Mammary epithelial cell (primary cell): ENCODE measurements at regions of chr3 and their contacts with region 1.

Region 1: DNA sequence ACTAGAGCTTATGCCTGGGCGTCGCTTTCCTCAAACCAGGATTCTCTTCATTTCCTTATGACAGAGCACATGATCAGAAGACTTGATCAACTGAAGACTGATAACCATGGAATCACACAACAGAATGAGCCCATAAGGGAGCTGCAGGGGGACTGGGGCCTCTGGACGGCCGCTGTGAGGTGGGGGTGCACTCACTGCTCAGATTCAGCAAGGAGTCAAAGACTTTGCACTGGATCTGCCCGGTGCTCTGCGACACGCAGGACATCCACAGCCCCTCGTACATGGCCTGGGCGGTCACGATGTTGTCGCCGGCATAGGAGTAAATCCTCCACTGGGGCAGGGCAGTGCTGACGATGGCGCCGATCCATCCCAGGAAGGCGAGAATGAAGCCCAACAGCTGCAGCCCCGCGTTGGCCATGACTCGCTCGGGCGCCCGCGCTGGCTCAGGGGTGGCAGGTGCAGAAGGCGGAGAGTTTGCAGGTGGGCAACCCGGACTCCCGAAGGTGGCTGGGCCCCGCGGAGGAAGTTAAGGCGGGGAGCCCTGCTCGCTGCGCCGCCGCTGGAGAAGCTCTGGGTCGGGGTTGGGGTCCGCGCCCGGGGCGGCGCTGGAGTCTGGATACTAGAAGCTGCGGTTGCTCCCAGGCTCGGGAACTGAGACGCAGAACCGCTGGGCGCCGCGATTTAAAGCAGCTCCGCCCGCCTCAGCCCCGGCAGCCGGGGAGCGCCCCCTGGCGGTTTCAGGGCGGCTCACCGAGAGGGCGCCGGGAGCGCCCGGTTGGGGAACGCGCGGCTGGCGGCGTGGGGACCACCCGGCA is at the start of gene CLDN1:
- DNase-seq: peak; percentile 74
- H3K4me3 ChIP-seq: peak within 1 kb of the TSS; percentile 43 to 72 (median 51)
- H3K27ac ChIP-seq: peak within 1 kb of the TSS; percentile 9
- H3K4me1 ChIP-seq: peaks cover 37% of the 10 kb centered on the region
- H3K27me3 ChIP-seq: no peaks in the 10 kb centered on the region
- CTCF ChIP-seq: peak; percentile 69 to 97
- total RNA-seq, gene CLDN1: 12.3 to 78.7 TPM

Region 2: GRCh38 chr3:189961525-189962161 is 360.4 kb before region 1 on chr3:
- CTCF ChIA-PET with region 1: no interaction called
- dilution Hi-C with region 1: loop called (anchors 5 kb)
- in situ Hi-C with region 1: loop called in 1 of 2 experiments (anchors 10 kb)
- intact Hi-C with region 1: loop called (anchors 1 kb)
- DNase-seq: peak; percentile 82
- H3K4me3 ChIP-seq: no peak overlapping the region
- H3K27ac ChIP-seq: peak overlapping the region; percentile 2
- H3K4me1 ChIP-seq: peaks cover 18% of the 10 kb centered on the region
- H3K27me3 ChIP-seq: no peaks in the 10 kb centered on the region
- CTCF ChIP-seq: peak; percentile 90 to 97

Region 3: DNA sequence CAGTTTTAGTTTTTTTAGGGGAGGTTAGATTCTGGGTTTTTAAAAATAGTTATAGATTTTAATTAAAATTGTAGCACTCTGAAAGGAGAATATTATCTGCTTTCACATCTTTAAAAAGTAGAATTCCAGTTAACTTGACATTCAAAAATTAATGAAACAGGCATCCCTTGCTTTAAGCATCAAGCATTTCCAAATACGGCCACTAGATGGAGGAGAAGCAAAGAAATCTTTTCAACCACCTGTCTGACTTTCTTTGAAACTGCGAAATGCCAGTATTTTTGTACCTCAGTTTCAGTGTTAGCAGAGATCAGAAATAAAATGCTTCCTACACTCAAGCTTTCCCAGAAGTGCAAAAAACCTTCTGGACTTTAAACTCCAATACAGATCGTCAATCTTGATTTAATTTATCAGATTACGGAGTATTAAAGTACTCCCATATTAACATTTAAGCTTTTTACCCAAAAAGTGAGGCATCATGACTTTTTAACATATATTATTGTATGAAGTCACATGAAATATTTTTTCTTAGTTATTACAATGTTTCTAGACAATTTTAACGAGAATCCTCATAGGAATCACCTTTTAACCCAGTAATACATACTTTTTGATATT is 354.6 kb before region 1 on chr3:
- CTCF ChIA-PET with region 1: no interaction called
- dilution Hi-C with region 1: loop called (anchors 5 kb)
- in situ Hi-C with region 1: loop called in 1 of 2 experiments (anchors 10 kb)
- intact Hi-C with region 1: loop called (anchors 1 kb)
- DNase-seq: peak; percentile 41
- H3K4me3 ChIP-seq: no peak overlapping the region
- H3K27ac ChIP-seq: no peak overlapping the region
- H3K4me1 ChIP-seq: peaks cover 6% of the 10 kb centered on the region
- H3K27me3 ChIP-seq: no peaks in the 10 kb centered on the region
- CTCF ChIP-seq: peak; percentile 69 to 90

Region 4: GRCh38 chr3:190017521-190018288 is 304.3 kb before region 1 on chr3:
- CTCF ChIA-PET with region 1: no interaction called
- dilution Hi-C with region 1: no loop called
- in situ Hi-C with region 1: no loop called
- intact Hi-C with region 1: loop called (anchors 5 kb)
- DNase-seq: peak; percentile 70
- H3K4me3 ChIP-seq: no peak overlapping the region
- H3K27ac ChIP-seq: peak overlapping the region; percentile 19
- H3K4me1 ChIP-seq: peaks cover 42% of the 10 kb centered on the region
- H3K27me3 ChIP-seq: no peaks in the 10 kb centered on the region
- CTCF ChIP-seq: peak; percentile 41 to 53

Region 5: DNA sequence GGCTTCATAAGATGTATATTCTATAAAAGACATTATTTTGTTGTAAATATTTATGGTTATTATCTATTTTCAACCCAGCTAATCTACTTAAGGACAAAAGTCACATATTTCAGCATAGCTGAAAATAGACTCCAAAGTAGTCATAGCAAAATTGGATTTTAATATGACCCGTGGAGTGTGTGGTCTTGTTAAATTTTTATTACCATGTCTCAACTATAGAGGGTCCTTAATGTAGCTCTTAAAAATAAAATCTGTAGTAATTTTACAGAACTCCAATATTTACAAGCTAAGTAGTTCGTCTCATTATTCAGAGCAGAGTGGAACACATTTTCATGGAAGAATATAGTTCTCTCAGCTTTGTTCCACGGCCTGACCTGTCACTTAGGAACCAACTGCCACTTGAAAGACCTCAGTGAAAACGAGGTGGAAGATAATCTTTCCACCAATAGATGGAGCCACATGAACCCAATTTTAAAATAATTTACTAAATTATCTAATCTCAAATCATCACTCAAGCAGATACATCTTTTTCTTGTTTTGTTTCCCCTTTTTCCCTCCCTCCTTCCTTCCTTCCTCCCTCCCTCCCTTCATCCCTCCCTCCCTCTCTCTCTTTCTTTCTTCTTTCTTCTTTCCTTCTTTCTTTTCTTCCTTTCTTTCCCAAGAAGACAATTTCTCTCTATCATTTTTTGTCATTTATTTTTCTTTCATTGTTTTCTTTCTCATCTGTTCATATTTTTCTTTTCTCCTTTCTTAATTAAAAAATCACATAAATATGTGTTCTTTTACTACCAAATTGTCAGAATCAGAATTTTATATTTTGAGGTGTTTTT is 96.9 kb before region 1 on chr3:
- CTCF ChIA-PET with region 1: interaction called, 4 read pairs
- dilution Hi-C with region 1: loop called (anchors 5 kb)
- in situ Hi-C with region 1: loop called (anchors 5 kb)
- intact Hi-C with region 1: loop called (anchors 1 kb)
- DNase-seq: peak; percentile 48
- H3K4me3 ChIP-seq: no peak overlapping the region
- H3K27ac ChIP-seq: no peak overlapping the region
- H3K4me1 ChIP-seq: peaks cover 5% of the 10 kb centered on the region
- H3K27me3 ChIP-seq: no peaks in the 10 kb centered on the region
- CTCF ChIP-seq: peak; percentile 53 to 59

Region 6: GRCh38 chr3:190265796-190266195 is 56.2 kb before region 1 on chr3:
- CTCF ChIA-PET with region 1: no interaction called
- dilution Hi-C with region 1: no loop called
- in situ Hi-C with region 1: no loop called
- intact Hi-C with region 1: loop called (anchors 5 kb)
- DNase-seq: peak; percentile 100
- H3K4me3 ChIP-seq: no peak overlapping the region
- H3K27ac ChIP-seq: peak overlapping the region; percentile 75
- H3K4me1 ChIP-seq: peaks cover 31% of the 10 kb centered on the region
- H3K27me3 ChIP-seq: no peaks in the 10 kb centered on the region
- CTCF ChIP-seq: no peak

Region 7: DNA sequence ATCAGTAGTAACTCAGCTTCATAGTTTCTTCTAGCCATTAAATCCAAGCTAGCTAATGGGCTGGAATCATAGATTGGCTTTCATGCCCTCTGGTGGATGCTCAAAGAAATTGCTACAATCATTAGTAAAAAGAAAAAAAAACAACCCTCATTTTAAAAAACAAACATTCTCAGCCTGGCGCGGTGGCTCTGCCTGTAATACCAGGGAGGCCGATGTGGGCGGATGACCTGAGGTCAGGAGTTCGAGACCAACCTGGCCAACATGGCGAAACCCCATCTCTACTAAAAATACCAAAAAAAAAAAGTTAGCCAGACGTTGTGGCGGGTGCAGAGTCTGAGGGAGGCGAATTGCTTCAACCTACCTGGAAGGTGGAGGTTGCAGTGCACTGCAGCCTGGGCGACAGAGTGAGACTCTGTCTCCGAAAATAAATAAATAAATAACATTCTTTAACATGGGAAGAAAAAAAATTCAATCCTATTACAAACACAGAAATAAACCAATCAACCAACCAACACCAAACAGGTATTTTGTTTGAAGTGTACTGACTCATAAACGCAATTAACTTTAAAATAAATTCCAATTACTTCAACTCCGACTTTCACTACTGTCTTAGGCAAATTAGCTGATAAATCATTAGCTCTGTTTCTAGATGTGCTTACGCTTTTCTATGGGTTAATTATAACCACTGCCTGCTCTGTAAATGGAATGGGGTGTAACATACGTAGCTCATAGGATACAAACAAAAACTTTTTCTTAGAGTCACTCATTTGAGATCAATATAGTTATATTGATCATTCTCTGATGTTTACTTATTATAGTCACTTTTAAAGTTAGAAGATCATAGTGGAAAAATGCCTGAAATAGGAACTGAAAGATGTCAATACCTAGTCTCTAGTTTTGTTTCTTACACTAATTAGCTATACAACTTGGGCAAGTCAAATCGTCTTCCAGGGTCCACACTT is 102.8 kb after region 1 on chr3:
- CTCF ChIA-PET with region 1: no interaction called
- dilution Hi-C with region 1: no loop called
- in situ Hi-C with region 1: no loop called
- intact Hi-C with region 1: loop called (anchors 1 kb)
- DNase-seq: peak; percentile 73
- H3K4me3 ChIP-seq: no peak overlapping the region
- H3K27ac ChIP-seq: no peak overlapping the region
- H3K4me1 ChIP-seq: peaks cover 5% of the 10 kb centered on the region
- H3K27me3 ChIP-seq: no peaks in the 10 kb centered on the region
- CTCF ChIP-seq: peak; percentile 44 to 64